AG04450 (cell line): ENCODE measurements at regions of chr2 and their contacts with region 1.

Region 1: GRCh38 chr2:222707689-222708525 is 36.4 kb downstream of the MOGAT1 start:
- DNase-seq: no peak
- H3K4me3 ChIP-seq: no peak overlapping the region
- H3K27ac ChIP-seq: no peak overlapping the region
- H3K27me3 ChIP-seq: no peaks in the 10 kb centered on the region
- CTCF ChIP-seq: peak; percentile 89

Region 2: GRCh38 chr2:222753251-222753824 is 45.4 kb after region 1 on chr2:
- CTCF ChIA-PET with region 1: interaction called, 10 read pairs
- POLR2A ChIA-PET with region 1: no interaction called
- DNase-seq: no peak
- H3K4me3 ChIP-seq: no peak overlapping the region
- H3K27ac ChIP-seq: no peak overlapping the region
- H3K27me3 ChIP-seq: no peaks in the 10 kb centered on the region
- CTCF ChIP-seq: no peak

Region 3: DNA sequence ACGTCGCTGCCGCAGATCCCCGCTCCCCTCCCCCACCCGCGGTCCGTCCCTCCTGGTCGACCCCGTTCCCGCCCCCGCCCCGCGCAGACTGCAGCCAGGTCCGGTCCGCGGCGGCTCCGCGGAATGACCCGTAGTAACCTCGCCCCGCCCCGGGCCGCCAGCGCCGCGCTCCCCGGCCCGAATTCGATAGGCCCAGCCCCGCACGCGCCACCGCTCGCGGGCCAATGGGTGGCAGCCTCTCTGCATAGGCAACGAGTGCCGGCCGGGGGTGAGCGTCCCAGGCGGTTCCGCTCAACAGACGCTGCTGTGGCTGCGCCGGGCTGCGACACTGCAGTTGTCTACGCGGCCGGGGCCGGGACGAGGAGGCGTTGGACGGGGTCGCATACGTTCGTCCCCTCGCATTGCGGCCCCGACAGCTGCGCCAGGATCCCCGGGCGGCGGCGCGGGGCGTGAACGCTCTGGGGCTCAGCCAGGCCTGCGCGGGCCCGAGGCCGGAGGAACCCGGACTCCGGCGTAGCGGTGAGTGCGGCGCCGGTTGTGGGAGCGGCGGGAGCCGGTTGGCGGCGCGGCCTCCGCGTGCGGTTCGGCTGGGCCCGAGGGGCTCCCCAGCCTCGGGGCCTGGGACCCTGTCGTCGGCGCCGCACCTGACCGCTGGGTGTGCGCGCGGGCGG is 153.0 kb after region 1 on chr2 and contains the start of gene ACSL3:
- CTCF ChIA-PET with region 1: interaction called, 35 read pairs
- POLR2A ChIA-PET with region 1: interaction called, 10 read pairs
- DNase-seq: peak; percentile 59
- H3K4me3 ChIP-seq: peak within 1 kb of the TSS; percentile 93
- H3K27ac ChIP-seq: peak within 1 kb of the TSS; percentile 49
- H3K27me3 ChIP-seq: no peaks in the 10 kb centered on the region
- CTCF ChIP-seq: no peak
- polyA plus RNA-seq, gene ACSL3: 80.9 and 88.9 TPM in 2 replicates

Region 4: DNA sequence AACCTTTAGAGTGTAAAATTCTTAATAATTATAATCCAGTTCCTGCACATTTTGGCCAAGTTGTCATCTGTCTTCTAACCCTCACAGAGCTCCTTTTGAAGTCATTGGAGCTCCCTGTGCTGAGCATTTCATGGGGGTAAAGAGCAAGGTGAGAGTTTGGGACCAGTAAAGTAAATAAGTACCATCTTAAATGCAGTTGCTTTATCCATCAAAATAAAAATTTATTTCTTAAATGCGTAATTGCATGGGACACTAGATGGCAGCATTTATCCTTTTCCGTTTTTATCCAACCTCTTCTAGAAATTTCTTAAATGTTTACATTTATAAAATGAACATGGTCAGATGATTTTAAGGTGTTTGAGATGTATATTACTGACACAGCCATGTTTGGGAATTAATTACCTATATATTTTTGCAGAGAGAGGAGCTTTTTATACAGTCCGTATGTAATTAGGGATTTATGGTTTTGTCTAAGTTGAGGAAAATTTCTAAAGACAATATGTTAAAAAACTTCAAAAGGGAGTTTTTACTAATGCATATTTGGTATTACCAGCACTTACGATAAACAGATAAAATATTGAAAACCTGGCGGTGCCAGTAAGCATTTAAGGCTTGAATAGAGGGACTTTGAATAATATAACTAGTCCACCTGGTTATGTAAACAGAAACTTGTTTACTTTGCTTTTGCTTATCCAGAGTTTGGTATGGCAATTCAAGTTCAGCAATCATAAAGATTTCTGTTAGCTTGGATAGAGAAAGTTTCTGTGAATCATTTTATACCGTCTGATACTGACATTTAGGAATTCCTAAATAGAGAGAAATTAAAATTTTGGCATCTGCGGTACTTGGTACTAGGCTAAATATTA is 207.4 kb after region 1 on chr2:
- CTCF ChIA-PET with region 1: interaction called, 21 read pairs
- POLR2A ChIA-PET with region 1: interaction called, 3 read pairs
- DNase-seq: no peak
- H3K4me3 ChIP-seq: no peak overlapping the region
- H3K27ac ChIP-seq: no peak overlapping the region
- H3K27me3 ChIP-seq: no peaks in the 10 kb centered on the region
- CTCF ChIP-seq: peak; percentile 61

Region 5: GRCh38 chr2:222959336-222959735 is 251.4 kb after region 1 on chr2:
- CTCF ChIA-PET with region 1: interaction called, 13 read pairs
- POLR2A ChIA-PET with region 1: no interaction called
- DNase-seq: peak; percentile 72
- H3K4me3 ChIP-seq: no peak overlapping the region
- H3K27ac ChIP-seq: peak overlapping the region; percentile 52
- H3K27me3 ChIP-seq: no peaks in the 10 kb centered on the region
- CTCF ChIP-seq: peak; percentile 55

Region 6: GRCh38 chr2:223537669-223538601 is 830.0 kb after region 1 on chr2:
- CTCF ChIA-PET with region 1: no interaction called
- POLR2A ChIA-PET with region 1: no interaction called
- DNase-seq: no peak
- H3K4me3 ChIP-seq: no peak overlapping the region
- H3K27ac ChIP-seq: no peak overlapping the region
- H3K27me3 ChIP-seq: no peaks in the 10 kb centered on the region
- CTCF ChIP-seq: no peak